Psoas muscle (tissue), 8 donors: ENCODE measurements at regions of chr15 and their contacts with region 1.

Region 1: DNA sequence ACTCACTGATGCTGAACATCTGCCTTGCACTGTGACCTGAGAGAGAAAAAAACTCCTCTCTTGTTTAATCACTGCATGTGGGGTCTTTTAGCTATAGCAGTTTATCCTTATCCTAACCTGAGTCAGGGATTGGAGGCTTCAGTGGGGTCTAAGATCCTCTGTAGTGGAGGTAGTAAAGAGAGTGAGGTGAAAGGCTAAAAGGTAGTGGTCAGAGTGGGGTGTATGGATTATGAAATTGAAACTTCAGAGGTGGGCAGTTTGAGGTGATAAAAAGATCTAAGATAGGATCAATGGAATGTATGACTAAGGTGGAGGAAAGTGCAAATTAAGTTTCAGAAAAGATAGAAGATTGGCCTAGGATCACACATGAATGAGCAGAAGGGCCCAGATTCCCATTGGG is 36.5 kb downstream of the DET1 start:
- DNase-seq: no peak
- ATAC-seq: no peak
- H3K4me3 ChIP-seq: no peak overlapping the region
- H3K27ac ChIP-seq: no peak overlapping the region
- H3K4me1 ChIP-seq: no peaks in the 10 kb centered on the region
- H3K27me3 ChIP-seq: no peaks in the 10 kb centered on the region
- CTCF ChIP-seq: no peak

Region 2: DNA sequence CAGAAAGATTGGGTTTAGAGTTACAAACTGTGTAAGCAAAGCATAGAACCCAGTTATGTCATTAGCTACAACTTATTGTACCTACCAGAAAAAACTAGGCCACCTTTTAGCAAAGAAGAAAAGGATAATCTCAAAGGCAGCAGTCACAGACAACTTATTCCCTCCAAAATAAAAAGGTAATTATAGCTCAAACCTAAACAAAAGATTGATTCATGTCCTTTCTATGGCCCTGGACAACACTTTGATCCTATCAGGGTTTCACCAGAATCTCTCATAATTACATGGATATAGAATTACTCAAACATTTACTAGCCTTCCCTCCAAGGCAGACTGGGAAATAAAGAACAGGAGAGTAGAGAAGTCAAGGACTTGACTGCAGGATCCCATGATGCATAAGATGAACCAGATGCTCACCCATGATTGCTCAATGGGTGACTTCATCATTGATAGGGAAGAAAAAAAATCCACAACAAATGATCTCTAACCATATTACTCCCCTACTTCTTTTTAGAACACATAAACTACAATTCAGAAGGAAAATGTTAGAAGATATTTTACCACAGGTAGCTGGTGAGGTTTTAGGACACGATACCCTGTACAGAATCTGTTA is 19.2 kb after region 1 on chr15:
- intact Hi-C with region 1: loop called in 1 of 2 experiments (anchors 2 kb)
- DNase-seq: no peak
- ATAC-seq: no peak
- H3K4me3 ChIP-seq: no peak overlapping the region
- H3K27ac ChIP-seq: no peak overlapping the region
- H3K4me1 ChIP-seq: peaks cover 9% of the 10 kb centered on the region
- H3K27me3 ChIP-seq: no peaks in the 10 kb centered on the region
- CTCF ChIP-seq: no peak

Region 3: DNA sequence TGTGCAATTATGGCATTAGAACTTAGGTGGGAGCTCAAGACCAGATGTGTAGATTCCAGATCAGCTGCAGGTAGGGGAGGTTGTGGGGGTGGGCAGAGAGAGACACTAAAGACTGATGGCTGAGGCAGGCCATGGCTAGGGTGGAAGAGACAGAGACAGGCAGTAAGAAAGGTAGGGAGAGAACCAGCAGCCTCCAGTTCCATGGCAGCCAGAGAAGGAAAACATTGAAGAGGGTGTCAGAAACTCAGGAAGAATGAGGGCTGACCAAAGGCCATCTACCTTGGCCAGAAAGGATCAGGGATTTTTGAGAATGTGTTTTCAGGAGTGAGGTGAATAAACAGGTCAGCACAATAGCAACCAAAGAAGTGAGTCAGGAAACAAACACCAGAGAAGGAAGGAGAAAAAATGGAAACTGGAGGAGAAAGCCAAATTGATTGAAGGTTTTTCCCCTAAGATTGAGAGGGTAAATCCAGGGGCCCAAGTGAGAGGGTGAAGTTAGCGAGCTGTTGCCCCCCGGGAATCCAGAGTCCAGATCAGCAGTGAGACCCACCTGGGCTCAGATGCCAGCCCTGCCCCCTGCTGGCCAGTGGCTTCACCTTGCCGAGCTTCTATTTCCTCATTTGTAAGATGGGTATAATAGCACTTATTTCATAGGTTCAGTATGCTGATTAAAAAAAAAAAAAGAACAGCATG is 619.3 kb after region 1 on chr15:
- intact Hi-C with region 1: no loop called
- DNase-seq: peak in 1 of 2 donors; percentile 71
- ATAC-seq: peak in 3 of 4 donors; percentile 39 to 50 (median 44)
- H3K4me3 ChIP-seq: no peak overlapping the region
- H3K27ac ChIP-seq: peak overlapping the region; percentile 79
- H3K4me1 ChIP-seq: peaks cover 57% of the 10 kb centered on the region
- H3K27me3 ChIP-seq: no peaks in the 10 kb centered on the region
- CTCF ChIP-seq: peak; percentile 64